Activated CD8-positive, alpha-beta T cell treated with anti-CD3 and anti-CD28 coated beads for 36 hours (primary cell): ENCODE measurements at regions of chr1 and their contacts with region 1.

Region 1: DNA sequence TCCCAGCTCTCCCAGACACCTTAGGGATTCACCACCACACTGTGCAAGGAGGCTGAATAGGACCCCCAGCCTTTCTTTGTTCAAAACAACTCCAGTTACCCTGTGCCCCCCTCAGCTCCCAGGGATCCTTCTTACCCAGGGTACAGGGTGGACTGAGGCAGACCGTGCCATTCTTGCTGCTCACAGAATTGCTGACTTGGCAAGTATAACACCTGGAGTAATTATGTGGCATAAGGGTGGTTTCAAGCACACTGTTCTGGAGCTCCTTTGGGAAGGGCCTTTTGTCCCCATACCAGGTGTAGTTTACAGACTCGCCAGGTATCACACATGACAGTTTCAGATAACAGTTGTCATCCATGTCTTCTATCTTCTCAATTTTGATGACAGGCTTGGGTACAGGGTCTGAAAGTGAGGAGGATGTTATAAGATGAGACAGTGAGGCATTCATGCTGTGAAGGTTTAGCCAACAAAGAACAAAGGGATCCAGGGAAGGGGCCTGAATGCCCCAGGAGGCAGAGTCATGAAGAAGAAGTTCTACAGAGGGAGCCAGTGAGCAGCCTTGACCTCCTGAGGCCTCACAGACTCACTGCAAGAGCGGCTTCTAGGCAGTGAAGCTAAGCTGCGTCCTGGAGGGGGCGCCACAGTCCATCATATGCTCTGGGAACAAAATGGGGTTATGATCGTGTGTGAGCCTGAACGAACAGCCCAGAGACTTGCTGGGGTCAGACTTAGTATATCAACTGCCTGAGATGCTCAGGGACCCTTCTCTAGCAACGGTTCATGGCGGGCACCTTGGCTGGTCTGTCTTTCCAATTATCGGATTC is 30.3 kb downstream of the CD48 start:
- DNase-seq: peak; percentile 96
- ATAC-seq: peak; percentile 74
- H3K4me3 Mint-ChIP-seq: no peak overlapping the region
- H3K27ac Mint-ChIP-seq: peak overlapping the region; percentile 95
- H3K4me1 Mint-ChIP-seq: peaks cover 67% of the 10 kb centered on the region
- H3K27me3 Mint-ChIP-seq: no peaks in the 10 kb centered on the region
- CTCF ChIP-seq: peak; percentile 97

Region 2: GRCh38 chr1:160550572-160551034 is 130.7 kb before region 1 on chr1:
- CTCF ChIA-PET with region 1: no interaction called
- POLR2A ChIA-PET with region 1: no interaction called
- intact Hi-C with region 1: no loop called
- DNase-seq: peak; percentile 79
- ATAC-seq: peak; percentile 91
- H3K4me3 Mint-ChIP-seq: no peak overlapping the region
- H3K27ac Mint-ChIP-seq: peak overlapping the region; percentile 60
- H3K4me1 Mint-ChIP-seq: peaks cover 28% of the 10 kb centered on the region
- H3K27me3 Mint-ChIP-seq: no peaks in the 10 kb centered on the region
- CTCF ChIP-seq: peak; percentile 65

Region 3: DNA sequence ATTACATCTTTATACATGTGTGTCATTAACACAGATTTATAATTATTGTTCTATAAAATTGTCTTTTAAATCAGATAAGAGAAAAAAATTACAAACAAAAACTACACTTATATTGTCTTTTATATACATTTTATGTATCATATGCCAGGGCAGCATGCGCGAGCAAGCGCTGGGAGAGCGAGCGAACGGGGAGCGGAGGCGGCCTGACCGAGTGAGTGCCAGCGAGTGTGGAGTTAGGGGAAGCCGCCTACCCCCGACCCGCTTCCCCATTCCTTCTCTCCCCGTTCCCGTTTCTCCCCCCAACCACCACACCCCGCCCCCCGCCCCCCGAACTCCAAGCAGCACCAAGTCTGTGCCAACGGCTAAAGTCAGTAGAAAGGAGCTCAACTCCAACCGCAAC is 11.5 kb before region 1 on chr1:
- CTCF ChIA-PET with region 1: interaction called, 37 read pairs
- POLR2A ChIA-PET with region 1: interaction called, 7 read pairs
- intact Hi-C with region 1: no loop called
- DNase-seq: no peak
- ATAC-seq: no peak
- H3K4me3 Mint-ChIP-seq: no peak overlapping the region
- H3K27ac Mint-ChIP-seq: no peak overlapping the region
- H3K4me1 Mint-ChIP-seq: peaks cover 34% of the 10 kb centered on the region
- H3K27me3 Mint-ChIP-seq: no peaks in the 10 kb centered on the region
- CTCF ChIP-seq: no peak

Region 4: GRCh38 chr1:160720356-160721085 is 39.2 kb after region 1 on chr1:
- CTCF ChIA-PET with region 1: interaction called, 82 read pairs
- POLR2A ChIA-PET with region 1: interaction called, 5 read pairs
- intact Hi-C with region 1: loop called (anchors 5 kb)
- DNase-seq: no peak
- ATAC-seq: no peak
- H3K4me3 Mint-ChIP-seq: no peak overlapping the region
- H3K27ac Mint-ChIP-seq: no peak overlapping the region
- H3K4me1 Mint-ChIP-seq: peaks cover 65% of the 10 kb centered on the region
- H3K27me3 Mint-ChIP-seq: no peaks in the 10 kb centered on the region
- CTCF ChIP-seq: no peak

Region 5: GRCh38 chr1:160891474-160891873 is 210.2 kb after region 1 on chr1:
- CTCF ChIA-PET with region 1: no interaction called
- POLR2A ChIA-PET with region 1: no interaction called
- intact Hi-C with region 1: no loop called
- DNase-seq: no peak
- ATAC-seq: no peak
- H3K4me3 Mint-ChIP-seq: no peak overlapping the region
- H3K27ac Mint-ChIP-seq: no peak overlapping the region
- H3K4me1 Mint-ChIP-seq: no peaks in the 10 kb centered on the region
- H3K27me3 Mint-ChIP-seq: peaks cover 2% of the 10 kb centered on the region
- CTCF ChIP-seq: no peak